IMR-90 (cell line): ENCODE measurements at regions of chr1 and their contacts with region 1.

Region 1: GRCh38 chr1:162854245-162854882 is 6.6 kb downstream of the CCDC190 start:
- DNase-seq: peak; percentile 82
- ATAC-seq: peak; percentile 82
- H3K4me3 ChIP-seq: no peak overlapping the region
- H3K27ac ChIP-seq: no peak overlapping the region
- H3K4me1 ChIP-seq: peaks cover 4% of the 10 kb centered on the region; the same call in 1 of the 2 replicates
- H3K27me3 ChIP-seq: no peaks in the 10 kb centered on the region
- CTCF ChIP-seq: peak; percentile 87
- POLR2A ChIP-seq: no peak
- RAD21 ChIP-seq: peak; percentile 83

Region 2: GRCh38 chr1:162822391-162823200 is 31.8 kb before region 1 on chr1:
- CTCF ChIA-PET with region 1: no interaction called
- POLR2A ChIA-PET with region 1: no interaction called
- dilution Hi-C with region 1: no loop called
- in situ Hi-C with region 1: no loop called
- intact Hi-C with region 1: no loop called
- DNase-seq: no peak
- ATAC-seq: peak; percentile 80
- H3K4me3 ChIP-seq: peak overlapping the region; percentile 59
- H3K27ac ChIP-seq: no peak overlapping the region; the same call in 1 of the 2 replicates
- H3K4me1 ChIP-seq: peaks cover 5% of the 10 kb centered on the region
- H3K27me3 ChIP-seq: peaks cover 2% of the 10 kb centered on the region
- CTCF ChIP-seq: no peak
- POLR2A ChIP-seq: no peak
- RAD21 ChIP-seq: no peak

Region 3: DNA sequence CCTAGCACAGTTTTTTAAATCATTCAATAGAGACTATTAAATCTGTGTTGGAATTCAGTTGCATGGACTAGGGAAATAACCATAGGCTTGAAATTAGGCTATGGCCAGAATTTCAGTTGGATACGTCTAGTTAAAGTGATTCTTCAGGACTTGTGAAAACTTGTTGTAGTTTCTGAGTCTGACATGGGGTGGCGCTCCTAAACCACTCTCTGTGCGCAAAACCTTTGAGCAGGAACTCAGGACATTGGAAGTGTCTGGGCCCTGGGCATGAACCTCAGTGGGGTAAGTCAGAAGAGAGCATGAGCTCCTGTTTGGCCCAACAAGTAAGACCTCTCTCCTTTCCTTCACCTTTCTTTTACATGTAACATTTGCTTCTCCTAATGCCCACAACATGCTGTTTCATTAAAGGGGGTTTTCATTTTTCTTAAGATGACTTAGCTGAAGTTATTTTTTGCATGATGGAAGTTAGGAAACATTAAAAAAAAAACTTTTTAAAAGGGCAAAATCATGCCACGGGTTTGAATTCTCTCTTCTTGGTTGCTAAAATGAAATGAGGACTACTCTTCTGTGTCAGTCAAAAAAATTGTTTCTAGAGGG is 23.7 kb after region 1 on chr1:
- CTCF ChIA-PET with region 1: interaction called, 3 read pairs
- POLR2A ChIA-PET with region 1: no interaction called
- dilution Hi-C with region 1: no loop called
- in situ Hi-C with region 1: no loop called
- intact Hi-C with region 1: loop called (anchors 2 kb)
- DNase-seq: peak; percentile 80
- ATAC-seq: peak; percentile 85
- H3K4me3 ChIP-seq: no peak overlapping the region
- H3K27ac ChIP-seq: no peak overlapping the region
- H3K4me1 ChIP-seq: peaks cover 2% of the 10 kb centered on the region; the same call in 1 of the 2 replicates
- H3K27me3 ChIP-seq: no peaks in the 10 kb centered on the region
- CTCF ChIP-seq: peak; percentile 95
- POLR2A ChIP-seq: peak; percentile 40; the same call in 1 of the 2 replicates
- RAD21 ChIP-seq: peak; percentile 100

Region 4: DNA sequence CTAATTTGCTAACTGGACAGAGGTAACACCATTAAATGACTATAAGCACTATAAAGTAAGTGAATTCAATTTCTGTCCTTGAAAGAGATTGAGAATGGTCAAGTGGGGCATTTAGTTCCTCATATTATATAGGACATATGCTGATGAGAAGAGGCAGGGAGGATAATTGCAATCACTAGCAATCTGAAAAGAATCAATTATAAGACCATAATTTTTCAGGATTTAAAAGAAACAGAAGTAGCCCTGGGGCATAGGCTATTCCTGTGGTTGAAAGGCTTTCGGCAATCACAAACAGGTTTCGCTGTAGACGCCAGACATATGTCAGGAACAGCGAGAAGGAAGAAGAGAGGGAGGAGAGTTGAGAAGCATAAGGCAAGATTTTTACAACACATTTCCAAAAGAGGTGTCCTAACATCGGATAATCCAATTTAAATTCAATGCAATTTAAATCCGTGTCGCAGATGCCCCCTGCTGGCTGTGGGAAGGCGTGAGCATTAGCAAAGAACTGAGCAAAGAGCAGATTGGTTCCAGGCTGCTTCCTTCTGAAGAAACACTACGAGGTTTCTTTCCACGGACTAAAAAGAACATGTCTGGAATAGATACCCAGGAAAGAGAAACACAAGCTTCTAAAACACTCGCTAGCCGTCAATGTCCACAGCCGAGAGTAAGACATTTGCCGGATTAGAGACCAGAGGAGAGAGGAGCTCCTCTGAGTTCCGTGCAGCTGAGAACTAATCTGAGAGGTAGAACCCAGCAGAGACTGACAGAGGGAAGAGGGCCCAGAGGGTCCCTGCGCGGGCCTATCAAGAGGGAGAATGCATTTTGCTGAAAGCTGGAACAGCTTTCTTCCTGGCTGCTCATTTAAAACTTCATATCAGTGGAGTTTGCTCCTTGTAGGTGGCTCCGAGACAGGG is 320.4 kb after region 1 on chr1:
- CTCF ChIA-PET with region 1: interaction called, 6 read pairs
- POLR2A ChIA-PET with region 1: no interaction called
- dilution Hi-C with region 1: no loop called
- in situ Hi-C with region 1: loop called (anchors 5 kb)
- intact Hi-C with region 1: loop called (anchors 2 kb)
- DNase-seq: peak; percentile 65
- ATAC-seq: peak; percentile 74
- H3K4me3 ChIP-seq: no peak overlapping the region
- H3K27ac ChIP-seq: no peak overlapping the region
- H3K4me1 ChIP-seq: peaks cover 10% of the 10 kb centered on the region
- H3K27me3 ChIP-seq: no peaks in the 10 kb centered on the region
- CTCF ChIP-seq: peak; percentile 94
- POLR2A ChIP-seq: no peak
- RAD21 ChIP-seq: peak; percentile 89

Region 5: DNA sequence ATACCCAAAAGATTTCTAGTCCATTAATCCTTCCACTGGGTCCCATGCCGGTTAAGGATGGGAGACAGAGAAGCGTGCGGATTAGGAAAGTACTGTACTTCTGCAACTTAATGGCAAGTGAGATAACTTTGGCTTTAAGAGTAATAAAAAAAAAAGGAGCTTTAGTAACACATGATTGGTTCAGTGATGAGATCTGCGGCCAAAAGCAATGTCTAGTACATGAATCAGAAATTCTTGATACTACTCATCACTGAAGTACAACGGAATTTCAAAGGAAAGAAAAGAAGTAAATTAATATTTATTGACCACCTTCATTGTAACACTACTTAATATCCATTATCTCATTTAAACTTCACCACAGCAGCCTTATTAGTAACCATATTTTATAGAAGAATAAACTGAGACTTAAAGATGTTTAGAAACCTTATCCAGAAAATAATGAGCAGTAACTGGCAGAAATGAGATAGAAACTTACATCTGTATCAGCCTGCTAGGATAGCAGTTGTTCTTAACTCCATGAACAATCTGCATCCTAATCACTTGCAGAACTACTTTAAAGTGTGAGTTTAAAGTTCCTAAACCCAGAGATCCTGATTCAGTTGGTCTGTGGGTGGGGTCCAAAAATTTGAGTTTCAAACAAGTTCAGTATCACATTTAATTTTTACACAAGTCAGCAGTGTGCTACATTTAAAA is 453.3 kb after region 1 on chr1:
- CTCF ChIA-PET with region 1: no interaction called
- POLR2A ChIA-PET with region 1: no interaction called
- dilution Hi-C with region 1: loop called (anchors 25 kb)
- in situ Hi-C with region 1: loop called (anchors 5 kb)
- intact Hi-C with region 1: no loop called
- DNase-seq: peak; percentile 88
- ATAC-seq: peak; percentile 89
- H3K4me3 ChIP-seq: no peak overlapping the region
- H3K27ac ChIP-seq: peak overlapping the region; percentile 25; the same call in 1 of the 2 replicates
- H3K4me1 ChIP-seq: peaks cover 3% of the 10 kb centered on the region; the same call in 1 of the 2 replicates
- H3K27me3 ChIP-seq: no peaks in the 10 kb centered on the region
- CTCF ChIP-seq: no peak
- POLR2A ChIP-seq: no peak
- RAD21 ChIP-seq: no peak

Region 6: GRCh38 chr1:163321311-163322305 is 467.2 kb after region 1 on chr1 and contains the start of gene NUF2:
- CTCF ChIA-PET with region 1: no interaction called
- POLR2A ChIA-PET with region 1: no interaction called
- dilution Hi-C with region 1: loop called (anchors 25 kb)
- in situ Hi-C with region 1: no loop called
- intact Hi-C with region 1: no loop called
- DNase-seq: peak; percentile 99
- ATAC-seq: peak; percentile 99
- H3K4me3 ChIP-seq: peak within 1 kb of the TSS; percentile 62
- H3K27ac ChIP-seq: peak within 1 kb of the TSS; percentile 23
- H3K4me1 ChIP-seq: peaks cover 3% of the 10 kb centered on the region; the same call in 1 of the 2 replicates
- H3K27me3 ChIP-seq: no peaks in the 10 kb centered on the region
- CTCF ChIP-seq: no peak
- POLR2A ChIP-seq: peak; percentile 83
- RAD21 ChIP-seq: no peak
- total RNA-seq, gene NUF2: 18.5 and 23.6 TPM in 2 replicates